Right ventricle myocardium inferior (tissue), 1 donor: ENCODE measurements at regions of chr12 and their contacts with region 1.

Region 1: DNA sequence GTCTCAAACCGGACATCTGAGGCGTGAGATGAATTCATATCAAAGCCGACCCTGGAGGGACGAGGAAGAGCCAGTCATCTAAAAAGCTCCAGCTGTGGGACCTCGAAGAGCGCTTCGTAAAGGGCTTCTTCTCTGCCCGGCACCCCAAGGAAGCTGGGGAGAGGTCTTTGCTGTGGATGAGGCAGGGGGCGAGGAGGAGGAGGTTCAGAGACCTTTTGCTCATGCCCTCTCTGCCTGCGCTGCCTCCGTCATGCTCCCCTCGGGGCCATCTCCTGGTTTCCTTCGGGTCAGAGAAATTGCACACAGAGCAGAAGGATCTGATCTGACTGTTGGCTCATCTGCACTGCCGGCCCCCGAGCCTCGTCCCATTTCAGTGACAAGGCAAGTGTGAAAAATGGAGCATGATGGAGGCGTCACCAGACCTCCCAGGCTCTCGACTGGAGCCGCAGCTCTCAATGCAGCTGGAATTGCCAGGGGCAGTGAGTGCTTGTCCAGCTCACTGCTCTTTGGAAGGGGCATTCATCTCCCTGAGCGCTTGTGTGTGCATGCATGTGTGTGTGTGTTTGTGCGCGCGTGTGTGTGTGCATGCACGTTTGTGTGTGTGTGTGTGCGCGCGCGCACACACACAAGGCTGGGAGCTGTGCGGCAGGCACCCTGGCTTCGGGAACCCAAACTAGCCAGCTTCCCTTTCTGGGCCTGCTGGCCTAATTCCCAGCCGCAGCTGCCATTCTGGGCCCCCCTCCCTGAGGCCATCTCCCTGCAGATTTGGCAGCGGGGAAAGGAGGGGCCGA is 9.2 kb downstream of the CABP1 start:
- DNase-seq: no peak
- ATAC-seq: no peak

Region 2: DNA sequence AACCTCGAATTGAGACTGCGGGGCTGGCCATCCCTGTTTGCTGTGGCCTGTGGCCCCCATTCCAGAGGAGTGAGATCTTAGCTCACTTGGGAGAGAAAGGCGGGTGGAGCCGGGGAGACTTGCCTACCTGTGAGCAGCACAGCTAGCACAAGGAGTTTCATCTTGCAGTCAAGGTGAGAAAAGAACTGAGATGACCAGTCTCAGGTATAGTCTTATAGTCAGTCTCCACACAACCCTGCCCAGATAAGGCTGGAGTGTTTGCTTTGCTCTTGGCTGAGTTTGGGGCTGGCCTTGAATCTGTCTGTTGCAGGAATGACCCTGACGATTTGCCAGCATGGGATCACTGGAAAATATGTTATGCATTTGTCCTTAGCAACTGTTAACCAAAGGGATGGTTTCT is 322.0 kb before region 1 on chr12 and contains the start of gene PLA2G1B:
- intact Hi-C with region 1: no loop called
- DNase-seq: no peak
- ATAC-seq: no peak
- total RNA-seq, gene PLA2G1B: not detected

Region 3: DNA sequence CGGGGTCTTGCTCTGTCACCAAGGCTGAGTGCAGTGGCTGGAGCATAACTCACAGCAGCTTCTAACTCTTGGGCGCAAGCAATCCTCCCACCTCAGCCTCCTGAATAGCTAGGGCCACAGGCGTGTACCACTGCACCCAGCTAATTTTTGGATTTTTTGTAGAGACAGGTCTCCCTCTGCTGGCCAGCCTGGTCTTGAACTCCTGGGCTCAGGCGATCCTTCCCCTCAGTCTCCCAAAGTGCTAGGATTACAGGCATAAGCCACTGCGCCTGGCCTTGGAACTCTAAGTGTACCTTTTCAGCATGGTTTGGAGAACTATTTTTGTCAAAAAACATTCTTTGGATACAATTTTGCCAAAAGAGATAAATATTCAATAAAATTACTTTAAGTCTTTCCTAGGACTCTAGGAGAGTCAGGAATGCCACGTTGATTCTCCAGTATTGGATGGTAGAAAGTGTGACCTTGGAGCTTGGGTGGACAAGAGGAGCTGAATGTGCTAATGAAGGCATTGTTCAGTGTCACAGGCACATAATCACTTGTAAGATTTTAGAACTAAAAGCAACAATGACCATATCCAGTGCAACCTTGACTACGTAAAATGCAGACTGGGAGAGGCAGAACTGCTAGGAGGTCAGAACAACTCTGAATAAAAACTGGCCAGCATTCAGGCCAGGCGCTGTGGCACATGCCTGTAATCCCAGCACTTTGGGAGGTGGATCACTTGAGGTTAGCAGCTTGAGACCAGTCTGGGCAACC is 182.9 kb before region 1 on chr12:
- intact Hi-C with region 1: no loop called
- DNase-seq: no peak
- ATAC-seq: no peak

Region 4: DNA sequence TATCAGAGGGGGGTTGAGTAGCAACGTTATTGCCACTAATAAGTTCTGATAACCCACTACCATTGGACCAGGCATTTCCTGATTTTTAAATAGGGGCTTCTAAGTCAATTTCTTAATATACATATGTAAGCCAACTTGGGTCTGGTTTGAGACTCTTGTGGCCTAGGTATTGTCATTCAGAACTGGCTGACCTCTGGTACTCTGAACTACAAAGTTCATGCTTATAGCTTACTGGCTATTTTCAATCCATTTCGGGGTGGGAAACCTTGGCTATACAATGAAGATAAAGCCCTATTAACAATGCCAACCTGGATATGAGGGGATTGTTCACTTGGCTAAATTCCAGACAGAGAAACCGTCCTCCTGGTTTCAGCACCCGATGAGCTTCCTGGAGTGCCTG is 145.1 kb before region 1 on chr12:
- intact Hi-C with region 1: no loop called
- DNase-seq: no peak
- ATAC-seq: no peak

Region 5: GRCh38 chr12:120713861-120714482 is 64.3 kb after region 1 on chr12:
- intact Hi-C with region 1: loop called (anchors 1 kb)
- DNase-seq: no peak
- ATAC-seq: peak; percentile 69

Region 6: GRCh38 chr12:120971299-120972179 is 321.9 kb after region 1 on chr12:
- intact Hi-C with region 1: loop called (anchors 5 kb)
- DNase-seq: no peak
- ATAC-seq: peak; percentile 72